ENCODE measurements at regions of chr14 and their contacts with region 1.

Region 1: DNA sequence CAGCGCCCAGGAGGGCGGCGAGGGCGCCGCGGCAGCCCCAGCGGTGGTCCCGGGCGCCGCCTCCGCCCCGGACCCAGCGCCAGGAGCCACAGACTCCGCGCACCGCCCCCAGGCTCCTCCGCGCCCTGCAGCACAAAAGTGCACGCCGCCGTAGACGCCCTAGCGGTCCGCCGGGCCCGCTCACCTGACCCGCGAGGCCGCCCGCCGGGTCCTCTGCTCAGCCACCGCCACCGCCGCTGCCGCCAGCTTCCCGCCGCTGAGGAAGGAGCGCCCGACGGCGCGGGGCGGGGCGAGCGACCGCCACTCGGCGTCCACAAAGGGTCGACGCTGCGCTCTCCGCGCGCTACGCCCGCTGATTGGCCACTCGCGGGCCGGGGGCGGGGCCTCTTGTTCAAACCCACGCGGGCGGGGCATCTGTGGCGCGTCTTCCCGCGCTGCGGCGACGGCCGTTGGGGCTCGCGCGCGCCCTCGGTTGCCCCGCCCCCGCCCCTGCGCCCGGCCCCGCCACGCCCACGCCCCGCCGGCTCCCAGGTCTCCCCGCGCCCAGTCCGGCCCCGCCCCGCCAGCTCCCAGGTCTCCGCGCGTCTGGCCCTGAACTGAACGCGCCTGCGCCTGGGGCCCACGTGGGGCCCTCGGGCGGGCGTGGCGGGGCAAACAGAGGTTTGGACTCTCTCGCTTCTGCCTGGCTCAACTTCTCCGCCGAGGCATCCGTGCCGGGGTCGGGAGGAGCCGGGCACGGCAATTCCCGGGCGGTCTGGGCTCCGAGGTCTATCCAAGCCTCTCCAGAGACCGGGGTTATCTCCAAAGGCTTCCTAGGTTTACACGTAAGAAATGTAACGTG is at the start of gene CDCA4:
- DNase-seq: peak; percentile 66
- ATAC-seq: peak; percentile 78
- H3K4me3 ChIP-seq: peak within 1 kb of the TSS; percentile 89
- H3K27ac ChIP-seq: peak within 1 kb of the TSS; percentile 93
- H3K4me1 ChIP-seq: peaks cover 19% of the 10 kb centered on the region
- H3K27me3 ChIP-seq: no peaks in the 10 kb centered on the region
- CTCF ChIP-seq: no peak
- EP300 ChIP-seq: no peak
- POLR2A ChIP-seq: peak; percentile 87
- RAD21 ChIP-seq: no peak
- polyA plus RNA-seq, gene CDCA4: 10.4 to 16.1 TPM

Region 2: GRCh38 chr14:104985675-104986525 is 35.1 kb before region 1 on chr14 and contains the start of gene CLBA1:
- CTCF ChIA-PET with region 1: no interaction called
- POLR2A ChIA-PET with region 1: interaction called, 7 read pairs
- RAD21 ChIA-PET with region 1: interaction called, 15 read pairs
- SMC1A ChIA-PET with region 1: interaction called, 4 read pairs
- in situ Hi-C with region 1: no loop called
- intact Hi-C with region 1: no loop called
- DNase-seq: peak; percentile 55
- ATAC-seq: peak; percentile 97
- H3K4me3 ChIP-seq: peak within 1 kb of the TSS; percentile 74
- H3K27ac ChIP-seq: no peak within 1 kb of the TSS
- H3K4me1 ChIP-seq: no peaks in the 10 kb centered on the region
- H3K27me3 ChIP-seq: no peaks in the 10 kb centered on the region; a peak in 1 of 4 replicates
- CTCF ChIP-seq: no peak
- EP300 ChIP-seq: no peak
- POLR2A ChIP-seq: 0 out of 2 replicates have a peak, but pooled peaks have one; percentile 44
- RAD21 ChIP-seq: no peak
- polyA plus RNA-seq, gene CLBA1: 0.07 TPM in 1 of 2 experiments, not detected in the other

Region 3: GRCh38 chr14:105281371-105282097 is 260.5 kb after region 1 on chr14:
- CTCF ChIA-PET with region 1: no interaction called
- POLR2A ChIA-PET with region 1: no interaction called
- RAD21 ChIA-PET with region 1: no interaction called
- SMC1A ChIA-PET with region 1: no interaction called
- in situ Hi-C with region 1: no loop called
- intact Hi-C with region 1: no loop called
- DNase-seq: no peak
- ATAC-seq: peak; percentile 55
- H3K4me3 ChIP-seq: no peak overlapping the region
- H3K27ac ChIP-seq: no peak overlapping the region
- H3K4me1 ChIP-seq: no peaks in the 10 kb centered on the region; the same call in 1 of the 2 replicates
- H3K27me3 ChIP-seq: no peaks in the 10 kb centered on the region
- CTCF ChIP-seq: peak; percentile 56 to 72 (median 70)
- EP300 ChIP-seq: no peak
- POLR2A ChIP-seq: no peak
- RAD21 ChIP-seq: peak; percentile 67